Spleen (tissue), 13 donors: ENCODE measurements at regions of chr22 and their contacts with region 1.

Region 1: GRCh38 chr22:36762687-36763260 is 13.1 kb downstream of the IFT27 start:
- DNase-seq: peak; percentile 43
- H3K4me3 ChIP-seq: no peak overlapping the region
- H3K27ac ChIP-seq: no peak overlapping the region
- H3K4me1 ChIP-seq: peaks cover 0 to 2% (median 0%) of the 10 kb centered on the region in 6 donors
- H3K27me3 ChIP-seq: no peaks in the 10 kb centered on the region
- CTCF ChIP-seq: no peak
- POLR2A ChIP-seq: no peak

Region 2: DNA sequence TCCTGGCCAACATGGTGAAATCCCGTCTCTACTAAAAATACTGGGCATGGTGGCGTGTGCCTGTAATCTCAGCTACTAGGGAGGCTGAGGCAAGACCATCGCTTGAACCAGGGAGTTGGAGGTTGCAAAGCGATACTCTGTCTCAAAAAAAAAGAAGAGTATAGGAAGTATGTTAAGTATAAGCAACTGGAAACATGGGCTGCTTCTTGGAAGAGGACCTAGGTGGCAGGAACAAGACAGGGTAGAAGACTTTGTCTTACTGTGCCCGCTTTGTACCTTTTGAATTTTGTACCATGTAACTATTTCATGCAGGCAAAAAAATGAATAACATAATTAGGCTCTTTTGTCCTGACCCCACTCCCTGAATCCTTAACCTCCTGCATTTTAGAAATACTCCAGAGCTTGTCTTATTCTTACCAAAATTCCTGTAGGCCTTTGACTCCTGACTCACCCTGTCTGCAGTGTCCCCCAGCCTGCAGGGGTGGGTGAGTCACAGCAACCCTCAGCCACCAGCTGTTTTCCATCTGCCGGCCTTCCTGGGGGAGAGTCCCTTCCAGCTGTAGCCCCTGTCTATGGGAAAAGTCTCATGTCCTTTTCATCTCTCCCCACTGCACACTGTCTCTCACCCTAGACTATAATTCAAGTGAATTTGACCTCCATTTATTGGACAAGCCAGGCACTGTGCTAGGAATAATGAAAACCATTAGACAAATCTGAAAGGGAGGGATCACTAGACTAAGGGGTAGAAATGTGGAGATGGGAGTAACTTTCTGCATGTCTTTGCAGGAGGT is 323.1 kb before region 1 on chr22:
- intact Hi-C with region 1: no loop called
- DNase-seq: no peak
- H3K4me3 ChIP-seq: no peak overlapping the region
- H3K27ac ChIP-seq: peak overlapping the region in 5 of 8 donors; percentile 7 to 46 (median 26)
- H3K4me1 ChIP-seq: peaks cover 14 to 71% (median 52%) of the 10 kb centered on the region in 6 donors
- H3K27me3 ChIP-seq: no peaks in the 10 kb centered on the region
- CTCF ChIP-seq: no peak
- POLR2A ChIP-seq: no peak

Region 3: DNA sequence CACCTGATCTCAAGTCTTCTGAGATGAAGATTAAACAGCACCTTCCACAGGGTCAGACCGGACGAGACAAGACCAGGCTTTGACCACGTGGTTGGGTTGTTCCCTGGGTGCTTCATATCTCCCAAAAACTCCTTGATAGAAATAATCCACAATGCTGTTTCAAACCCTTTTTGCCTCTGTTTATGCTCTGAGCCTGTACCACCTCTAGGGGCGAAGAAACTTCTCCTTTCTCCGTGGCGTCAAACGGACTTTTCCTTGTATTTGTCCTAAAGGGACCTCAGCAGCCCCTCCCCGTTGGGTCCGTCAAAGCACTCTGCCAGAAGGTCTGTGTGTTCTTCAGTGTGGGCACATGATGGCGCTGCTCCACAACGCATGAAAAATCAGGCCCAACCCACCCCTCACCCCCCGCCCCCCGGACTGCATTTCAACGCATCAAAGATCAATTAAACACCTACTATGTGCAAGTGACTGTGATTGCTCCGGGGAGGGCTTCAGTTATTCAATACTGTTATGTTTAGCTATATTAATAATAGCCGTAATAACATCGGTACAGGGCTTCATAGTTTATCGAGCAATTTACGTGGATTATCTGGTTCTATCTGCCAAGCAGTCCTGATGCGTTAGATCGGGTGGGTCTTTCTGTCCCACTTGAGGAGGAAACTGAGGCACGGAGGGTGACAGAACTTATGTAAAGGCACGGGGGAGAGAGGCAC is 216.5 kb before region 1 on chr22:
- intact Hi-C with region 1: loop called (anchors 10 kb)
- DNase-seq: no peak
- H3K4me3 ChIP-seq: no peak overlapping the region
- H3K27ac ChIP-seq: no peak overlapping the region
- H3K4me1 ChIP-seq: peaks cover 0 to 24% (median 2%) of the 10 kb centered on the region in 6 donors
- H3K27me3 ChIP-seq: peaks cover 0 to 42% (median 0%) of the 10 kb centered on the region in 7 donors
- CTCF ChIP-seq: peak in 10 of 11 experiments; percentile 9 to 63 (median 46)
- POLR2A ChIP-seq: no peak